Spleen (tissue), 13 donors: ENCODE measurements at regions of chr6 and their contacts with region 1.

Region 1: DNA sequence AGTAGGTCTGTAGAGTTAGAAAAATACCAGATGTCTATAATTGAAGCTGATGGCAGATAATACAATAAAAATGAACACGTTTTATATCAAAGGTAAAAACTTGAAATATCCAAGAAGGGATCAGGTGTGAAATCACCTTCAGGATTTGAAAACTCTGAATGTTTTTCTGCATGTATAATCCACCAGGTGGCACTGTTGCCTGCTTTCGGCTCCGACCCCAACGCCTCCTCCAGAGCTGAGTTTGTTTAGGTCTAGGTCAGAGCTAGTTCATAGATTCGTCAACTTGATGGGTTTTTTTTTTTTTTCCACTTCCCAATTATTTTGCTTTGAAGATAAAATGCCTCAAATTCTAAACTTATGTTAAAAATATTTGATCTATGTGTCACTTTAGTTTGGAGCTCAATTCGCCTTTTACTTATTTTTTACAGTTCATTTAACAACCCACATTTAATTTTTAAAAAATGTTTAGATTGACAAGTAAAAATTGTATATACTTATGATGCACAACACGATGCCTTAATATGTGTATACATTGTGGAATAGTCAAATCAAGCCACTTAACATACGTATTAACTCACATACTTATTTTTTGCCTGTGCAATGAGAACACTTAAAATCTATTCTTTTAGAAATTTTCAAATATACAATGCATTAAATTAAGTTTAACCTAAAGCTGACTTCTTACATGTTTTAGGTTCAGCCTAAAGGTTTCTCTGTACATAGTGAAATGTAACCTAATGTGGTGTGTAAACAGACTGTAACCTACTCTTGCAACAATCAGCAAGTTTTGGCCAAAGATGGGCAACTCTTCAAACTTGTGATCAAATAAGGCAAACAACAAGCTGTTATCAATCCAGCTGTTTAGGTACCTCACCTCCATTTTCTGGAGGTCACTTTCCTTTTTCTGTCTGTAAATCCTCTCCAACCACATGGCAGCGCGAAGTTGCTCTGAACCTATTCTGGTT is 39.4 kb upstream of the ENPP4 start:
- DNase-seq: peak; percentile 80
- H3K4me3 ChIP-seq: no peak overlapping the region
- H3K27ac ChIP-seq: peak overlapping the region in 1 of 8 donors; percentile 10
- H3K4me1 ChIP-seq: peaks cover 0 to 5% (median 0%) of the 10 kb centered on the region in 6 donors
- H3K27me3 ChIP-seq: peaks cover 0 to 8% (median 0%) of the 10 kb centered on the region in 7 donors
- CTCF ChIP-seq: peak; percentile 38 to 83 (median 72)
- POLR2A ChIP-seq: no peak

Region 2: DNA sequence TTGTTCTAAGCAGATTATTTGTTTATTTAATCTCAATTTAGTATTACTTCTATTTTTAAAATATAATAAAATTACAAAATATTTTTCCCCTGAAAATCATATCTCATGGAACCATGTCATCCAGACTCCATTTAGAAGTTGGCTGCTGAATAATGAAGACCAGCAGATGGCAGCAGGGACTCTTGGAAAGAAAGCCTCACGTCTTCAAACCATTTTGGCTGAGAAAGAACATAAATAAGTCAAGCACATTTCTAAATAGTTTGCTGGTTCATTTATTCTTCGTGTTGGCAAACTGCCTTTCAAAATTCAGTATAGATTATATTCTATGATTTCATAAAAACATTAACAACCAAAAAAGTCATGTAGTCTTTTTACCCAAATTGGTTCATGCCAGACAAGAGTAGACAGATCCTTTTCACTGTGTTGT is 329.2 kb after region 1 on chr6:
- intact Hi-C with region 1: loop called (anchors 10 kb)
- DNase-seq: no peak
- H3K4me3 ChIP-seq: no peak overlapping the region
- H3K27ac ChIP-seq: no peak overlapping the region
- H3K4me1 ChIP-seq: peaks cover 0 to 7% (median 3%) of the 10 kb centered on the region in 6 donors
- H3K27me3 ChIP-seq: no peaks in the 10 kb centered on the region
- CTCF ChIP-seq: peak; percentile 13 to 77 (median 61)
- POLR2A ChIP-seq: no peak

Region 3: DNA sequence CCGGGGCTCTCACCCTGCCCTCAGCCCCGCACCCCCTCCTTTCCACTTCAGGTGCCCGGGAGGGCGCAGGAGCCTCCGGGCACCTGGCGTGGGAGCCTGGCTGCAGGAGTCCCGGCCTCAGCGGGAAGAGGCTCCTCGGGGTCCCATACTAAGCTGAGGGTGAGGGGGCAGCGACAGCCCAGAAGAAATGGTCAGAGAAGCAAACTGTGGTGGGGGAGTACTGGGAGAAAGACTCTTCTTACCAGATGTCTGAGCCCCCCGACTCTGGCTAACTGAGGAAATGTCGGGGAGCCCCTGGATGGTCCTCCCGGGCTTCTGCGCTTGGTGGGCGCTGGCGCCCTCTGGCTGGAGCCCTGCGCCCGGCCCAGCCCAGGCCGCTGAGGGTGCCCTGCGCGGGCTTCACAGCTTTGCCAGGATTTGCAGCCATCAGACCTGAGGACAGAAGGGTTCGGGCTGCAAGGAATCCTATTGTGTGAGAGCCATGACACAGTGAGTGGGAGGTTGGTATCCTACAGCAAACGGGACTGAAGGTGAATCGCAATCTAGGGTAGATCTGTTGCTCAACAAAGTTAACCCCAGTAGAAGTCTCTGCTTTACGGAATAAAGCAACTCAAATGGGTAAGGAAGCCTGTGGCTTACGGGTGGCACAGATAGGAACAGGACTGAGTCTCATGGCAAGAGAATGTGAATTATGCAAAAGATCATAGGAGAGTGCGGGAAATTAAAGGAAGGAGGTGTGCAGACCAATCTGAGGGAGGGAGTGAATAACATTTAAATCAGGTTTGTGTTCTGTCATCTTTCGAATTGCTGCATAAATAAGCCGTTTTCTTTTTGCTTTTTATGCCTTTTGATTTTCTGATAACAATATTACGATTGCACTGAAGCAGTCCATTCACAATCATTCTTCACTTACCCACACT is 401.5 kb after region 1 on chr6:
- intact Hi-C with region 1: loop called (anchors 5 kb)
- DNase-seq: peak; percentile 83
- H3K4me3 ChIP-seq: peak overlapping the region; percentile 53 to 86 (median 66)
- H3K27ac ChIP-seq: peak overlapping the region in 7 of 8 donors; percentile 13 to 75 (median 57)
- H3K4me1 ChIP-seq: peaks cover 0 to 22% (median 11%) of the 10 kb centered on the region in 6 donors
- H3K27me3 ChIP-seq: peaks cover 0 to 74% (median 17%) of the 10 kb centered on the region in 7 donors
- CTCF ChIP-seq: peak in 10 of 11 experiments; percentile 11 to 82 (median 64)
- POLR2A ChIP-seq: no peak

Region 4: DNA sequence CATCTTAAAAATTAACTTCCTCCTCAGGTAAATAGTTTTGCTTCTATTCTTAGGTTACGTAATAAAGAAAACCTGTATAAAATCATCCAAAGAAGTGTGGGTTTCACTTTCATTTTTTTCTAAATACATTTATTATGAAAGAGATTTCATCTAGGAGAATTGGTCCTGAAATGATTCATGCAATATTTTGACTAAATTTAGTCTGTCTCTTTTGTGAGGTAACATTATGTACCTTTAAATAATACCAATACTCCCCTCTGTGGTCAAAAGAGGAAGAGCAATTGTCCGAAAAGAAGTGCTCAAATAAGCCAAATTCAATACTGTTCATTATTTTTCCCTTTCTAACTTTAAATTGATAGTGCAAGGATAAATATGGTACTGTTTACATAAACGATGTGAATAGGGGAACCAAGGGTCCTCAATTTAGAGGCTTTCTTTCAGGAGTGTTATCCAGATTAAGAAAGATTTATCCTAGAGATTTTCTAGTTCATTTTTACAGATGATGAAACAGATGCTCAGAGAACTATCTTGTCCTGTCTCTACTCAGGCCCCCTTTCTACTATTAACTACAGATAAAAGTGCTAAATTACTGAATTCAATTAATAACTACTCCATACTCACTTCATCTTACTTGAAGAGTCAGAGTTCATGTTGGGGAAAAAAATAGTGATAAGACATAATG is 536.0 kb after region 1 on chr6:
- intact Hi-C with region 1: loop called (anchors 10 kb)
- DNase-seq: no peak
- H3K4me3 ChIP-seq: no peak overlapping the region
- H3K27ac ChIP-seq: no peak overlapping the region
- H3K4me1 ChIP-seq: peaks cover 0 to 10% (median 7%) of the 10 kb centered on the region in 6 donors
- H3K27me3 ChIP-seq: no peaks in the 10 kb centered on the region
- CTCF ChIP-seq: peak in 10 of 11 experiments; percentile 35 to 72 (median 52)
- POLR2A ChIP-seq: no peak